Mammary epithelial cell (primary cell): ENCODE measurements at regions of chr10 and their contacts with region 1.

Region 1: GRCh38 chr10:70549962-70550458 is 52.5 kb downstream of the PRF1 start:
- DNase-seq: peak; percentile 39
- H3K4me3 ChIP-seq: no peak overlapping the region
- H3K27ac ChIP-seq: no peak overlapping the region
- H3K4me1 ChIP-seq: no peaks in the 10 kb centered on the region
- H3K27me3 ChIP-seq: peaks cover 2% of the 10 kb centered on the region
- CTCF ChIP-seq: peak; percentile 82 to 94

Region 2: DNA sequence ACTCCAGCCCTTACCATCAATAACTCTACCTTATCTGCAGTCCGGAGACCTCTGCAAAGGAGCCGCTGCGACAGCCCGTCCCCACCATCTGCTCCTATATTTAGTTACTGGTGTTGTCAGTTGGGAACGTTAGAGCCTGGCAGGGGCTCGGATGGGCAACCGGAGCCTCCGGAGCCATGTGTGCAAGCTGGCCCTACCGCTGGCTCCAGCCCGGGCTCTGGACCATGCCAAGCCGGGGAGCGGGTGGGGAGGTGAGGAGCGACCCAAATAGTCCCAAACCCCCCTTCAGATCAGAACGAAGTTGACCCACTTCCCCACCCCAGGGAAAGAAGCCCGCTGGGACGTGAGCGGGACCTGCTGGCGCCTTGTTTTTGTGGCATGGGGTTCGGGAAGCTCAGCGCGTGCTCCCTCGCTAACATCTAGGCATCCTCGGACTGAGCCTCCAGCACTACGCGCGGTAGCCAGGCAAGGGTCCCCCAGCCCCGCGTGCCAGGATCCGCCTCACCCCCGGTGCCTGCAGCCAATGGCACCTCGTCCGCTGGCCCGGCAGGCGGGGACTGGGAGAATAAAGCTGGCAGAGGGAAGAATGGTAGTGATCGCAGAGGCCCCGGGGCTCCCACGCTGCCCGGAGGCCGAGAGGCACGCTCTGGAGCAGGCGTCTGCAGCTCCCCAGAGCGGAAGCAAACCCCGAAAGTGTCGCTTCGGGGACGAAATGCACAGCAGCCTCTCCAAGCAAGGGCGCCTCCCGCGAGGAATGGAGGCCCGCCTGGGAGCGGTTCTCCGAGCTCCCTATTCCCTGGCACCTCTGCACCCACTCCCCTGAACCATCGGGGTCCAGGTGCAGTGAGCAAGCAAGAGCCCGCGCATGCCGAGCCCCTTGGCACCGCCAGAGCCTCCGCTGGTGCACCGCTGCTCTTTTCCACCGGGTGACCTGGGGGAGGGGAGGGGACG is 168.3 kb before region 1 on chr10:
- CTCF ChIA-PET with region 1: no interaction called
- dilution Hi-C with region 1: no loop called
- in situ Hi-C with region 1: no loop called
- intact Hi-C with region 1: loop called (anchors 10 kb)
- DNase-seq: peak; percentile 39
- H3K4me3 ChIP-seq: peak overlapping the region; percentile 73 to 76 (median 75)
- H3K27ac ChIP-seq: peak overlapping the region; percentile 8
- H3K4me1 ChIP-seq: peaks cover 24% of the 10 kb centered on the region
- H3K27me3 ChIP-seq: no peaks in the 10 kb centered on the region
- CTCF ChIP-seq: no peak

Region 3: DNA sequence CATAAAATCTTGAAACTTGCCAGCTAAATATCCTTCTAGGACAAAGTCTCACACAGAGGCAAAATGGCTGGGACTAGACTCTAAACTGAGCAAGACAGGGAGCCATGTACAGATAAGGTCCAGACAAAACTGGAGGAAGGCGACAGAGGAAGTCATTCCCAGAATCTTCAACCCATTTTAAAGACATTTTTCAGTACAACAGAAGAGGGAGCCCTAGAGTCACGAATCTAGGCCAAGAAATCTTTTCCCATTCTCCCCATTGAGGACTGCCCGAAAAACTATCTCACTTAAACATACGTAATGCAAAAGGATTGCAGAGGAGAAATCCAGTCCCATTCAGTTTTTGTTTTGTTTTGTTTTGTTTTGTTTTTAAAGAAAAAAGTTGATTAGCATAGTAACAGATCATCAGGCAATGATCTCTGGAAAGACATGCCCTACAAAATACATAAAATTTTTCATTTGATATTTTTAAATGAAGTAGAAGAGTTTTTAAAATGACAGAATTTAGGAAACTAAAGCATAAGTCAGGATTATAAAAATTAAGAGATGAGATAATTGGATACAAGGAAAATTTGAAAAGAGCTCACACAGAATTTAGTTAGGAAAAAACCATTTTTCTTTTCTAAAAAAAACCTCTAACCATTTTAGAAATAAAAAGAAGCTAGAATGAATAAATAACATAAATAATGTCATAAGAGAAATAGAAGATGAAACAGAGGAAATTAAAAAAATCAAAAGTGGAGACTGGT is 69.4 kb after region 1 on chr10:
- CTCF ChIA-PET with region 1: no interaction called
- dilution Hi-C with region 1: no loop called
- in situ Hi-C with region 1: no loop called
- intact Hi-C with region 1: loop called (anchors 2 kb)
- DNase-seq: peak; percentile 44
- H3K4me3 ChIP-seq: no peak overlapping the region
- H3K27ac ChIP-seq: no peak overlapping the region
- H3K4me1 ChIP-seq: no peaks in the 10 kb centered on the region
- H3K27me3 ChIP-seq: peaks cover 4% of the 10 kb centered on the region
- CTCF ChIP-seq: peak; percentile 41 to 50

Region 4: GRCh38 chr10:70758757-70759514 is 208.9 kb after region 1 on chr10:
- CTCF ChIA-PET with region 1: no interaction called
- dilution Hi-C with region 1: no loop called
- in situ Hi-C with region 1: loop called (anchors 5 to 10 kb)
- intact Hi-C with region 1: loop called (anchors 1 kb)
- DNase-seq: peak; percentile 41
- H3K4me3 ChIP-seq: no peak overlapping the region
- H3K27ac ChIP-seq: no peak overlapping the region
- H3K4me1 ChIP-seq: no peaks in the 10 kb centered on the region
- H3K27me3 ChIP-seq: peaks cover 9% of the 10 kb centered on the region
- CTCF ChIP-seq: peak; percentile 54 to 81

Region 5: DNA sequence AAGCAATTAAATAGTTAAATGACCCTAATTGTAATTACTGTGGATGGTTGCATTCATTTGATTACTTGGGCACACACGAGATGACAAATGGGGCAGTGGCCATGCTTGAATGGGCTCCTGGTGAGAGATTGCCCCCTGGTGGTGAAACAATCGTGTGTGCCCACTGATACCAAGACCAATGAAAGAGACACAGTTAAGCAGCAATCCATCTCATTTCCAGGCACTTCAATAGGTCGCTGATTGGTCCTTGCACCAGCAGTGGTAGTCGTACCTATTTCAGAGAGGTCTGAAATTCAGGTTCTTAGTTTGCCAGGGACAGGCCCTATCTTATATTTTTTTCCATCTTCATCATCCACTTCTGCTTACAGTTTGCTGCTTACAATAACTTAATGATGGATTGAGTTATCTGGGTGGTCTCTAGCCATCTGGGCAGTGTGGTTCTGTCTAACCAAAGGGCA is 330.1 kb after region 1 on chr10:
- CTCF ChIA-PET with region 1: no interaction called
- dilution Hi-C with region 1: no loop called
- in situ Hi-C with region 1: loop called in 1 of 2 experiments (anchors 10 kb)
- intact Hi-C with region 1: loop called (anchors 1 kb)
- DNase-seq: peak; percentile 54
- H3K4me3 ChIP-seq: no peak overlapping the region
- H3K27ac ChIP-seq: no peak overlapping the region
- H3K4me1 ChIP-seq: no peaks in the 10 kb centered on the region
- H3K27me3 ChIP-seq: no peaks in the 10 kb centered on the region
- CTCF ChIP-seq: peak; percentile 92 to 94